ENCODE measurements at regions of chr17 and their contacts with region 1.

Region 1: DNA sequence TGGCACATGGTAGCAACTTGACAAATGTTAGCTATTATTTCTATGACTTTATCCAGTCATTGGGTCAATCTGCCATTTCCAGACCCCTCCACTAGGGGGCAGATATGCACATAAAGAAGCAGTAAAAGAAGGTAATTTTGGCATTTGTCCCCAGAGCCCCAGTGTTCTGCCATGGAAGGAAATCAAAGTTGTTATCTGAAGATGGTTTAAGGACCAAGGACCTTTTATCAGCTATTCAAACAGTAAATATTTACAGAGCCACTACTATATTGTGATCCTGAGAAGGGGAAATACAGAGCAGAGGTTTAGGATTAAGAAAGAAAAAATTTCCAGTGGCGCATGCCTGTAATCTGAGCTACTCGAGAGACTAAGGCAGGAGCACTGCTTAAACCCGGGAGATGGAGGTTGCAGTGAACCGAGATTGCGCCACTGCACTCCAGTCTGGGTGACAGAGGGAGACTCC is 20.0 kb downstream of the TRAF4 start:
- DNase-seq: peak; percentile 42
- ATAC-seq: peak; percentile 66
- H3K4me3 ChIP-seq: no peak overlapping the region
- H3K27ac ChIP-seq: no peak overlapping the region
- H3K4me1 ChIP-seq: peaks cover 17% of the 10 kb centered on the region
- H3K27me3 ChIP-seq: no peaks in the 10 kb centered on the region
- CTCF ChIP-seq: peak; percentile 86

Region 2: GRCh38 chr17:28777178-28777577 is 13.3 kb after region 1 on chr17:
- CTCF ChIA-PET with region 1: interaction called, 12 read pairs
- POLR2A ChIA-PET with region 1: interaction called, 7 read pairs
- in situ Hi-C with region 1: no loop called
- intact Hi-C with region 1: no loop called
- DNase-seq: no peak
- ATAC-seq: no peak
- H3K4me3 ChIP-seq: no peak overlapping the region
- H3K27ac ChIP-seq: no peak overlapping the region
- H3K4me1 ChIP-seq: no peaks in the 10 kb centered on the region
- H3K27me3 ChIP-seq: no peaks in the 10 kb centered on the region
- CTCF ChIP-seq: no peak

Region 3: GRCh38 chr17:28812091-28812747 is 48.4 kb after region 1 on chr17:
- CTCF ChIA-PET with region 1: interaction called, 9 read pairs
- POLR2A ChIA-PET with region 1: interaction called, 8 read pairs
- in situ Hi-C with region 1: loop called (anchors 10 kb)
- intact Hi-C with region 1: loop called (anchors 1 kb)
- DNase-seq: peak; percentile 65
- ATAC-seq: peak; percentile 98
- H3K4me3 ChIP-seq: peak overlapping the region; percentile 58 to 88
- H3K27ac ChIP-seq: peak overlapping the region; percentile 90
- H3K4me1 ChIP-seq: peaks cover 46% of the 10 kb centered on the region
- H3K27me3 ChIP-seq: no peaks in the 10 kb centered on the region
- CTCF ChIP-seq: no peak

Region 4: DNA sequence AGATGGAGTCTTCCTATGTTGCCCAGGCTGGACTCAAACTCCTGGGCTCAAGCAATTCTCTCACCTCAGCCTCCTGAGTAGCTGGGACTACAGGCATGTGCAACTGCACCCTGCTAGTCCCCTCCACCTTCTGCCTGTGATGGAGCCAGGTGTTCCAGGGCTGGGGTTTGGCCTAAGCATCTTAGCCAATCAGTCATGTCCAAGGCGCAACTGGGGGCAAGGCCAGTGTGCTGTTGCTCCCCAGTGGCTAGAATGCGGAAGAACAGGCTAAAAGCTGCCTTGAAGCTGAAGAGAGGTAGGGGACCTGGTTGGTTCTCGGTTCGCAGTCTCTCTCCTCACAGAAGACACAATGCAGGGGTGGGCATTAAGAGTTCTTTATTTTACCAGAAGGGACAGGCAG is 115.1 kb after region 1 on chr17:
- CTCF ChIA-PET with region 1: interaction called, 12 read pairs
- POLR2A ChIA-PET with region 1: no interaction called
- in situ Hi-C with region 1: loop called (anchors 10 kb)
- intact Hi-C with region 1: loop called (anchors 10 kb)
- DNase-seq: no peak
- ATAC-seq: peak; percentile 86
- H3K4me3 ChIP-seq: no peak overlapping the region
- H3K27ac ChIP-seq: no peak overlapping the region
- H3K4me1 ChIP-seq: no peaks in the 10 kb centered on the region
- H3K27me3 ChIP-seq: no peaks in the 10 kb centered on the region
- CTCF ChIP-seq: no peak